ENCODE measurements at regions of chr12 and their contacts with region 1.

Region 1: GRCh38 chr12:123633379-123634141 is at the starts of genes EIF2B1 and GTF2H3:
- H3K4me3 Mint-ChIP-seq: peak within 1 kb of the TSS; percentile 96
- H3K27ac Mint-ChIP-seq: peak within 1 kb of the TSS; percentile 98
- H3K4me1 Mint-ChIP-seq: peaks cover 20% of the 10 kb centered on the region
- H3K27me3 Mint-ChIP-seq: no peaks in the 10 kb centered on the region

Region 2: GRCh38 chr12:123601602-123602489 is 31.7 kb before region 1 on chr12 and contains the start of gene DDX55:
- intact Hi-C with region 1: loop called (anchors 1 kb)
- H3K4me3 Mint-ChIP-seq: peak within 1 kb of the TSS; percentile 92
- H3K27ac Mint-ChIP-seq: peak within 1 kb of the TSS; percentile 87
- H3K4me1 Mint-ChIP-seq: peaks cover 18% of the 10 kb centered on the region
- H3K27me3 Mint-ChIP-seq: no peaks in the 10 kb centered on the region

Measured in dendritic cell treated with granulocyte-macrophage colony-stimulating factor and Interleukin-4, amounts not matched to agents 40 ng/mL and 50 ng/mL, for 4 days (primary cell).